GM10248 (cell line): ENCODE measurements at regions of chr20 and their contacts with region 1.

Region 1: DNA sequence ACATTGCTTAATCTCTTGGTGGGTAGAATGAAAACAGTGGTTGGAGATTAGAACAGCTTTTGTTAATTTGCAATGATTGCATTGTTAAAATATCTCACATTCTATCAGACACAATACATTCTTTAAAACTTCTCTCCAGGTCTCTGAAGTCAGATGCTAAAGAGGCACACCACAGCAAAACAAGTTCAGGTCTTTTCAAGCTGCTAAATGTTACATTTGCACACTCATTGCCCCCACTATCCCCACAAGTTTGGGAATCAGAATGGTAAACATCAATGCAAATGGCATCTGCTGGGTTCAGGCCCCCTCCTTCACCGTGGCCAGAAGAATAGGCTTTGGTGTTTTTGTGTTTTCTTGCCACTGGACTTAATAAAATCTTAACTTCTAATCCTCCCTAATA is 10.1 kb upstream of the HAO1 start:
- DNase-seq: no peak
- CTCF ChIP-seq: no peak

Region 2: GRCh38 chr20:7935027-7935551 is 15.3 kb before region 1 on chr20:
- CTCF ChIA-PET with region 1: interaction called, 17 read pairs
- POLR2A ChIA-PET with region 1: no interaction called
- DNase-seq: peak; percentile 32
- CTCF ChIP-seq: no peak

Region 3: GRCh38 chr20:7967199-7967844 is 16.9 kb after region 1 on chr20:
- CTCF ChIA-PET with region 1: no interaction called
- POLR2A ChIA-PET with region 1: no interaction called
- DNase-seq: no peak
- CTCF ChIP-seq: no peak